GM12878 (cell line): ENCODE measurements at regions of chr2 and their contacts with region 1.

Region 1: DNA sequence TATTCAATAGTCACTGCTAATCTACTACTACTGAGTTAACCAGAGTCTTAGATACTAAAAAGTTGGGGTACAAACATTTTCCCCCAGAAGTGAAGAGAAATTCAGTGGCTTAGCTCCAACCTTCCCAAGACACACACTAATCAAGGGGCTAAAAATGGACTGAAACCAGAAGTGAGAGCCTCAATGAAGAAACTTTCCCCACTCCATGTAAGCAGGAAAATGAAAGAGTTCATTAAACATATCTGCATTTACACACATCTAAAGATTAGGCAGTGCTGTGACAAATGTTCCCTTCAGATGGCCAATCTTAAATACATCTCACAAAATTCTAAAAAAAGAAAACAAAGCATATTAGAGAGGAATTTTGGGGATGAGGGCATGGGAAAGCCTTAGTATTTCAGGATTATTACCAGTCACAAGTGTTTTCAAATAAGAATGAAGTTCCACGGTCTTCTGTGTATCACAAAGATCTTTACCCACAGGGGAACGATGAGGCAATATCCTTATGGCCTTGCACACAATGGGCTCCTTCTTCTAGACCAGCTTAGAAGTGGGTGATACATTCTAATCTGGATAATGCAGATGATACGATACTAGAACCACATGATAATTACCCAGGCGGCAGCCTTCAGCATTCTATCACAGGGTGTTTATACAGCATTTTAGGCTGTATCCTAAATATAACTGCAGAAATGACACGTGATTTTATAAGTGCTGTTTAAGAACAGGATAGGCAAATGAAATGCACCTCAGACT is 17.1 kb downstream of the ANKRD44 start:
- DNase-seq: no peak
- ATAC-seq: peak; percentile 69
- H3K4me3 ChIP-seq: peak overlapping the region; percentile 43
- H3K27ac ChIP-seq: peak overlapping the region; percentile 95
- H3K4me1 ChIP-seq: peaks cover 54% of the 10 kb centered on the region
- H3K27me3 ChIP-seq: no peaks in the 10 kb centered on the region
- CTCF ChIP-seq: no peak
- EP300 ChIP-seq: peak in 1 of 2 experiments; percentile 18; a peak in 2 of 4 replicates
- POLR2A ChIP-seq: no peak
- RAD21 ChIP-seq: no peak

Region 2: DNA sequence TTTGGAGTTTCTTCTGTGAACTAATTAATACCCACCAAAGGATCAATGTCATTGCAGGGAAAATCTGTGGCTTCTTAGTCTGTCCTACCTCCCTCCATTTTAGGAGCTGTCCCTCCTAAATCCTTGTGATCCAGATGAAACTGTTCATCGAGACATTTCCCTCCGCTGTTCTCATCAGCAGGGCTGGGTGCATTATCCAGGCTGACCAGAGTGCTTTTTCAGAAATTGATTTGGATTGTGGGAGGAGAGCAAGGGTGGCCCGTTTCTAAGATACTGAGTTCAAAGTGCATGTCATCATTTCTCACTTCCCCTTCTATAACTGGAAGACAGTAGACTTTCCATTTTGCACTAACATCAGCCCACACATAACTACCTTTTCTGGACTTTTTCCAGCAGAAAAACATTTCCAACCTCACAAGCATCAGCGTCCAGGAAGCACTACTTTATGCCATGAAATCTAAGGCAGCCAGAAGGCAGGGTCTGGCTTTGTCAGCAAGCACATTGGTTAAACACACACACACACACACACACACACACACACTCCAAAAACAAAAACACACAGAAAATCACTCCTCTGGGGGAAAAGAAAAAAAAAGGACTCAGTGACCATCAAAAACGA is 77.0 kb before region 1 on chr2:
- CTCF ChIA-PET with region 1: interaction called, 10 read pairs
- POLR2A ChIA-PET with region 1: interaction called, 27 read pairs
- RAD21 ChIA-PET with region 1: interaction called, 408 read pairs
- SMC1A ChIA-PET with region 1: interaction called, 433 read pairs
- in situ Hi-C with region 1: no loop called
- intact Hi-C with region 1: no loop called
- DNase-seq: peak; percentile 80
- ATAC-seq: peak; percentile 73
- H3K4me3 ChIP-seq: peak overlapping the region; percentile 34
- H3K27ac ChIP-seq: peak overlapping the region; percentile 82
- H3K4me1 ChIP-seq: peaks cover 70% of the 10 kb centered on the region
- H3K27me3 ChIP-seq: no peaks in the 10 kb centered on the region
- CTCF ChIP-seq: no peak
- EP300 ChIP-seq: peak; percentile 46 to 74; a peak in 3 of 4 replicates
- POLR2A ChIP-seq: 0 out of 2 replicates have a peak, but pooled peaks have one; percentile 23
- RAD21 ChIP-seq: 0 out of 2 replicates have a peak, but pooled peaks have one; percentile 16

Region 3: GRCh38 chr2:197239434-197239833 is 54.0 kb before region 1 on chr2:
- CTCF ChIA-PET with region 1: interaction called, 6 read pairs
- POLR2A ChIA-PET with region 1: interaction called, 6 read pairs
- RAD21 ChIA-PET with region 1: interaction called, 16 read pairs
- SMC1A ChIA-PET with region 1: interaction called, 9 read pairs
- in situ Hi-C with region 1: no loop called
- intact Hi-C with region 1: no loop called
- DNase-seq: no peak
- ATAC-seq: peak; percentile 82
- H3K4me3 ChIP-seq: peak overlapping the region; percentile 56
- H3K27ac ChIP-seq: peak overlapping the region; percentile 77
- H3K4me1 ChIP-seq: peaks cover 49% of the 10 kb centered on the region
- H3K27me3 ChIP-seq: no peaks in the 10 kb centered on the region
- CTCF ChIP-seq: no peak
- EP300 ChIP-seq: no peak
- POLR2A ChIP-seq: no peak
- RAD21 ChIP-seq: no peak

Region 4: GRCh38 chr2:197255543-197255942 is 37.9 kb before region 1 on chr2:
- CTCF ChIA-PET with region 1: interaction called, 5 read pairs
- POLR2A ChIA-PET with region 1: interaction called, 41 read pairs
- RAD21 ChIA-PET with region 1: interaction called, 60 read pairs
- SMC1A ChIA-PET with region 1: interaction called, 95 read pairs
- in situ Hi-C with region 1: no loop called
- intact Hi-C with region 1: loop called (anchors 2 kb)
- DNase-seq: peak; percentile 81
- ATAC-seq: peak; percentile 94
- H3K4me3 ChIP-seq: peak overlapping the region; percentile 59
- H3K27ac ChIP-seq: peak overlapping the region; percentile 97
- H3K4me1 ChIP-seq: peaks cover 31% of the 10 kb centered on the region
- H3K27me3 ChIP-seq: no peaks in the 10 kb centered on the region
- CTCF ChIP-seq: no peak
- EP300 ChIP-seq: peak; percentile 57 to 66; a peak in 3 of 4 replicates
- POLR2A ChIP-seq: peak; percentile 98
- RAD21 ChIP-seq: peak; percentile 20; the same call in 1 of the 2 replicates

Region 5: GRCh38 chr2:197261808-197262226 is 31.6 kb before region 1 on chr2:
- CTCF ChIA-PET with region 1: interaction called, 5 read pairs
- POLR2A ChIA-PET with region 1: interaction called, 41 read pairs
- RAD21 ChIA-PET with region 1: interaction called, 60 read pairs
- SMC1A ChIA-PET with region 1: interaction called, 95 read pairs
- in situ Hi-C with region 1: no loop called
- intact Hi-C with region 1: no loop called
- DNase-seq: peak; percentile 91
- ATAC-seq: peak; percentile 67
- H3K4me3 ChIP-seq: peak overlapping the region; percentile 12; the same call in 1 of the 2 replicates
- H3K27ac ChIP-seq: peak overlapping the region; percentile 87
- H3K4me1 ChIP-seq: peaks cover 63% of the 10 kb centered on the region
- H3K27me3 ChIP-seq: no peaks in the 10 kb centered on the region
- CTCF ChIP-seq: no peak
- EP300 ChIP-seq: peak in 1 of 2 experiments; percentile 77; a peak in 3 of 4 replicates
- POLR2A ChIP-seq: peak; percentile 38
- RAD21 ChIP-seq: no peak

Region 6: DNA sequence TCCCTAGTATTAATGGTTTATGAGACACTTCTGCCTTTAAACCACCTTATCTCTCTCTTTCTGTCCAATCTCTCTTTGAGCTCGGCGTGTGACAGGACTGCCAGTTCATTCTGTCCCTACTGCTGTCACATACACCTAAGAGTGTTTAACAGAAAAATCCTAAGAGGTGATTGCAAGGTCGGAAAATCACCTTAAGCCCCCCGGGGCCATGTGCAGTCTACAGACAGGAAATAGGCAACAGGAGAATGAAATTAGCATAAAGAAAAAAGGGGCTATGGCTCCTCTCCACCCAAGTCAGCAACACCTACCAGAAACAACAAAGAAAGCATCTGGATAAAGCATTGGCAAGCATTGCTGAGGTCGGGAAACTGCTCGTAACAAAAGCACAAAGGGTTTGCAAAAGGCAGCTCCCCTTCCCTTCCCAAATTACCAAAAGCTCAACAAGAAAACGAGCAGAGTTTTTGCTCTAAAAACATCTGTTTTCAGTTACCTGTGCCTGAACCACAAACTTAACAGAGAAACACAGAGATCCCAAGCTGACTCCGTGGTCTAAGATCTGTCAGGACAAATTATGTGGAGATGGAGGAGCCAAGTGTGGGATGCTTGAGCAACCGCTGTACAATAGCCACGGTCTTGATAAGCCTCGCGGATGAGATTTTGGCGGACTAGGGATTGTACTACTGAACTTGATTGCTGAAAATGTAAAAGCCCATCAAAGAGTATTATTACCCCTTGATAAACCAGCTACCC is 13.3 kb before region 1 on chr2:
- CTCF ChIA-PET with region 1: interaction called, 3 read pairs
- POLR2A ChIA-PET with region 1: interaction called, 9 read pairs
- RAD21 ChIA-PET with region 1: interaction called, 7 read pairs
- SMC1A ChIA-PET with region 1: interaction called, 17 read pairs
- in situ Hi-C with region 1: no loop called
- intact Hi-C with region 1: no loop called
- DNase-seq: no peak
- ATAC-seq: peak; percentile 82
- H3K4me3 ChIP-seq: peak overlapping the region; percentile 33; the same call in 1 of the 2 replicates
- H3K27ac ChIP-seq: peak overlapping the region; percentile 36
- H3K4me1 ChIP-seq: peaks cover 11% of the 10 kb centered on the region
- H3K27me3 ChIP-seq: no peaks in the 10 kb centered on the region
- CTCF ChIP-seq: no peak
- EP300 ChIP-seq: 0 out of 4 replicates have a peak, but pooled peaks of 1 of the 2 experiments have one; percentile 12
- POLR2A ChIP-seq: no peak
- RAD21 ChIP-seq: no peak